ENCODE measurements at regions of chrX and their contacts with region 1.

Region 1: GRCh38 chrX:153065389-153065788 is 6.9 kb upstream of the PNMA6A start:
- DNase-seq: peak; percentile 76

Region 2: DNA sequence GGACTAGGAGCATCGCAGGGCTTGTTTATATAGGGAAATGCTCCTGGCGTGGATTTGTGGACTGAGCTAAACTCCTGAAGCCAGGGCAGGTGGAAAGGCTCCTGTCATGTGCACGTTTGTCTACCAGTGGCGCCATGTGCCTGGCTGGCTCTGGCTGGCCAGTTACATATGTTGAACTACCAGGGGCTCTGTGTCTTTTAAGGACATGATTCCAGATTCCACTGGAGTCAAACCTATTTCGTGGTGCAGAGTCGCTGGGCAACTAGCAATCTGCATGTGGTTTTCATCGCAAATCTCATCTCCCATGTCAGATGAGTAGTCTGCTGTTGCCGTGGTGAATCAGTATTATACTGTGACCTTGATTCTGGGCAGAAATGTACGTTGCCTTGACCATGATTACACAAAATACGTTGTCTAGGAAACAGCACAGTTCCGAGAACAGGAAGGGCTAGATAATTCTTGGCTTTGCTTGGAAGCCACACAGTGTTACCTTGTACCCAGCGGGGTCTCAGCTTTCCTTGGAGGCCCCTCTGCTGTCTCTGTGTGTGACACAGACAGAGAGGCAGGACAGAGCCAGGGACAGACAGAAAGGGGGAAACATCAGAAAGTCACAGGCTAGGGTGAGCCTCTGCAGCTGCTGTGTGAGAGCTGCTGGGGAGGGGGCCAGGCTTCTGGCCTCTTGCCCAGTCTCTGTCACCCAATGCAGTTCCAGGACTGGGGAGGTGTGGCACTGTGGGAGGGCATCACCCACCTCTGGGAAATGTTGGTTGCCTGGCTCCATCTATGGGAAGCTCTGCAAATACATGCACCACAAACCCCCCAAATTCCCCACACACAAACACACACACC is 316.5 kb after region 1 on chrX:
- intact Hi-C with region 1: loop called in 1 of 2 experiments (anchors 5 kb)
- DNase-seq: peak; percentile 81